ENCODE measurements at regions of chr7 and their contacts with region 1.

Region 1: GRCh38 chr7:100889761-100890634 is 483 bp upstream of the UFSP1 start:
- DNase-seq: peak; percentile 94
- H3K4me3 ChIP-seq: peak overlapping the region; percentile 61
- H3K27ac ChIP-seq: peak overlapping the region; percentile 30
- H3K4me1 ChIP-seq: peaks cover 43% of the 10 kb centered on the region
- CTCF ChIP-seq: no peak

Region 2: DNA sequence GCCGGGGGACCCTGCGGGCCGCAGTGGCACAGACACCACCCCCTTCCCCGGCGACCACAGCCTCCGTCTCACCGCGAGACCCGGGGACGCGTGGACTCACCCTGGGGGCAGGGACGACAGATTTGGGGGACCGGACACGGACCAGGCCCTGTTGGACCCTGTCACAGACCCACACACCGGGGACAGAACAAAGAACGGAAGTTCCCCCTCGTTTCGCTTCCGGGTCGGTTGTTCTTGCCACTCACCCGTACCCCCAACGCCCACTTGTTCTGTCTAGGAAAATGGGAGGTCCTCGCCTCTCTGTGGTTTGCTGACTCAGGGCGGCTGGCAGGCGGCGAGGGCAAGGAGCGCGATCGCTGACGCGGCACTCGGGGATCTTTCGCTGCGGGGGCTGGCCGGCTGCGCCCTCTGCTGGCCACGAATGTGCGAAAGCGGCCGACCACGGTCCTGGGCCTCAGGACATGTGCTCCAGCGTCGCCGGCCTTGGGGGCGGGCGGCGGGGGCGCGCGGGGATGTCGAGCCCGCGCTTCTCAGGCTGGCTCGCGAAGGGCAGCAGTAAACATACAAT is 808.4 kb before region 1 on chr7 and contains the start of gene ZNF3:
- CTCF ChIA-PET with region 1: no interaction called
- POLR2A ChIA-PET with region 1: no interaction called
- intact Hi-C with region 1: loop called (anchors 10 kb)
- DNase-seq: peak; percentile 97
- H3K4me3 ChIP-seq: peak within 1 kb of the TSS; percentile 73
- H3K27ac ChIP-seq: peak within 1 kb of the TSS; percentile 64
- H3K4me1 ChIP-seq: peaks cover 22% of the 10 kb centered on the region
- CTCF ChIP-seq: peak; percentile 96
- total RNA-seq, gene ZNF3: 19.8 and 21.8 TPM in 2 replicates

Region 3: DNA sequence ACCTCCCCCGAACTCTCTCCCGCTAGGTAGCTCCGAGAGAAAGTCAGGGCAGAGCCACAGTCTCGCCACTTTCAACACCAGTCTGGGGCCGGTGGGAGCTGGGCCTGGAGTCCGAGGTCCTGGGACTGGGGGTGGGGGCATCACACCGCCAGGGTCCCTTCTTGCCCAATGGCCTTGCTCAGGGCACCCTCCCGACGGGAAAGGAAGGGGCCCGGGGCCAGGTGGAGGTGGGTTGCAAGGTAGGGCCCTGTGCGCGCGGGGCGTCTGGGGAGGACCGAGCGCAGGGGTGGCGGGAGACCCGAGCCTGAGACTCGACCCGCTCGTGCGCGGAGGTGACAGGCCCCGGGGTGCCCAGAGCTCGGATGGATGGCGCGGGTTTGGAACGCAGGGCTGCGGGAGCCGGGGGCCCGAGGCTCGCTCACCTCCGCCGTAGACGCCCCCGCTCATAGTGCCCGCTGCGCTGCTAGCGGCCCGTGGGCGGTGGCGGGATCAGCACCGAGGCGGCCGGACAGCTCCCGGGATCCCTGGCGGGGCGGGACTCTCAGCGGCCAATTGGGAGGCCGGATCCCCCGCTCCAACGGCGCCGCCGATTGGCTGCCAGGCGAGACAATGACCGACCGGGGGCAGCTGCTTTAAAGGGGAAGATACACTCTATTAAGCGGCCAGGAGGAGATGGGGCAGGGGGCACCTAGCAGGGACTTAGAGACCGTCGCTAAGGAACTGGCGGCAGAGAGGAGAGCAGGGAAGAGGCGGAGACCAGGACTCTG is 233.9 kb before region 1 on chr7 and contains the start of gene ACTL6B:
- CTCF ChIA-PET with region 1: no interaction called
- POLR2A ChIA-PET with region 1: no interaction called
- intact Hi-C with region 1: no loop called
- DNase-seq: no peak
- H3K4me3 ChIP-seq: no peak within 1 kb of the TSS
- H3K27ac ChIP-seq: no peak within 1 kb of the TSS
- H3K4me1 ChIP-seq: no peaks in the 10 kb centered on the region
- CTCF ChIP-seq: no peak
- total RNA-seq, gene ACTL6B: not detected in 2 replicates

Region 4: DNA sequence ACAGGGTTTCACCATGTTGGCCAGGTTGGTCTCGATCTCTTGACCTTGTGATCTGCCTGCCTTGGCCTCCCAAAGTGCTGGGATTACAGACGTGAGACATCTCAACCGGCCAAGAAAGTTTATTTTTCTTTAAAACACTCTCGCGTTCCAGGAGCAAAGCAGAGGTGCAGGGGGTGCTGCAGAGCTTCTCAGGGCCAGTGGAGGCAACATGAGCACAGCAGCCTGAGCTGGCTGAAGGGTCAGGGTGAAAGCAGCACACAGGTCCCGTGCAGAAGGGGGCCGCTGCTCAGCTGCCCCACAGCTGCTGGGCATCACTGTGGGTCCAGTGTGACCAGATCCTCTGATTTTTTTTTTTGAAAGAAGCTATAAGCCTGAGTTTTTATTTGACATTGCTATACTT is 108.7 kb before region 1 on chr7:
- CTCF ChIA-PET with region 1: no interaction called
- POLR2A ChIA-PET with region 1: no interaction called
- intact Hi-C with region 1: no loop called
- DNase-seq: no peak
- H3K4me3 ChIP-seq: no peak overlapping the region
- H3K27ac ChIP-seq: no peak overlapping the region
- H3K4me1 ChIP-seq: no peaks in the 10 kb centered on the region
- CTCF ChIP-seq: no peak

Region 5: DNA sequence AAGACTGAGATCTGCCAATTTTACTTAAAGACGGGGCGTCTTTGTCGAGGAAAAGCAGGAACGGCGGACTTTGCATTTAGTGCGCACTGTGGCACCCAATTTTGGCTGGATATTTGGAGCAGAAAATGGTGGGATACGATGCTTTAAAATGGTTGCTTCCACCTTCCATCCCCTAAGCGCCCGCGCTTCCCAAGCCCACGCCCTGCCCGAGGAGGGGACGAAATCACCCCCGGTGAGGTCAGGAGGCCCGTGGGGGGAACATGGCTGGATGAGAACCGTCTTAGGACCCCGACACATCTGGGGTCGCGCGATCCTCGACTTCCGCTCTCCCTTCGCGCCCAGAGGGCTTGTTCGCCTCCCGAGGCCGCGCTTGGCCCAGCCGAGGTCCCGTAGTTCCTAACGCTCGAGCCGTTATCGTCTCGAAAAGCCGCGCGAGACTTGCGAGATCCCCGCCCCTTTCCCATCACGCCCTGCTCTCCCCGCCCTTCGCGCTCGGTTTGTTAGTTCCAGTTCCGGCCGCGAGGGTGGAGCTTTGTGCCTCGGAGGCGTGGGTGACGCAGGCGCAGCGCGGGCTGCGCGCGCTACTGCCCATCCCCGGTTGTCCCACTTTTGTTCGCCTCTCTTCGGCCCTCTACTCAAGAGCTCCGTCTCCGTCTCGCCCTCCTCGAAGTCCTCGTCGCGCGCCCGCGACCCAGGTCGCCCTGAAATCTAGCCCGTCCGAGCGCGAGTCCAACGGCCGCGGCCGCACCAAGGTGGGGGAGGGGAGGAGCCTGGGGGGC is 15.2 kb before region 1 on chr7 and contains the start of gene SRRT:
- CTCF ChIA-PET with region 1: interaction called, 7 read pairs
- POLR2A ChIA-PET with region 1: interaction called, 40 read pairs
- intact Hi-C with region 1: no loop called
- DNase-seq: peak; percentile 99
- H3K4me3 ChIP-seq: peak within 1 kb of the TSS; percentile 78
- H3K27ac ChIP-seq: peak within 1 kb of the TSS; percentile 76
- H3K4me1 ChIP-seq: peaks cover 41% of the 10 kb centered on the region
- CTCF ChIP-seq: no peak
- total RNA-seq, gene SRRT: 154 and 174 TPM in 2 replicates

Region 6: DNA sequence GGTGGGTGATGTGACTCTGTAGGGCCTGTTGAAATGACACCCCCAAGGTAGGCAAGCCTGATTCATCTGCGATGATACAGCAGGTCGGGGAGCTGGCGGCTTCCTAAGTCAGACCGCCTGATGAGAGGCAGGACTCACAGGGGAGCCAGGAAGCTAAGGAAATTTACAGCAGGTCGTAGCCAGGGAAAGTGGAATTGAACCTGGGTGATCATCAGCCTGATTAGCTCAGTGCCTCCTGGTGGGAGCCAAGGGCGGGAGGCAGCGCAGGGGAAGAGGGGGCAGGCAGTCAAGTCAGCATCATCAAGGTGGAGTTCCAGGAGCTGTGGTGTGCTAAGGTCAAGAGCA is 176.8 kb after region 1 on chr7:
- CTCF ChIA-PET with region 1: interaction called, 11 read pairs
- POLR2A ChIA-PET with region 1: no interaction called
- intact Hi-C with region 1: no loop called
- DNase-seq: no peak
- H3K4me3 ChIP-seq: no peak overlapping the region
- H3K27ac ChIP-seq: no peak overlapping the region
- H3K4me1 ChIP-seq: no peaks in the 10 kb centered on the region
- CTCF ChIP-seq: no peak

Region 7: GRCh38 chr7:101085162-101085987 is 195.4 kb after region 1 on chr7 and contains the start of gene TRIM56:
- CTCF ChIA-PET with region 1: interaction called, 6 read pairs
- POLR2A ChIA-PET with region 1: interaction called, 16 read pairs
- intact Hi-C with region 1: no loop called
- DNase-seq: peak; percentile 86
- H3K4me3 ChIP-seq: peak within 1 kb of the TSS; percentile 77
- H3K27ac ChIP-seq: peak within 1 kb of the TSS; percentile 54
- H3K4me1 ChIP-seq: peaks cover 20% of the 10 kb centered on the region
- CTCF ChIP-seq: no peak
- total RNA-seq, gene TRIM56: 15.6 and 16.7 TPM in 2 replicates